PC-3 (cell line): ENCODE measurements at regions of chr7 and their contacts with region 1.

Region 1: DNA sequence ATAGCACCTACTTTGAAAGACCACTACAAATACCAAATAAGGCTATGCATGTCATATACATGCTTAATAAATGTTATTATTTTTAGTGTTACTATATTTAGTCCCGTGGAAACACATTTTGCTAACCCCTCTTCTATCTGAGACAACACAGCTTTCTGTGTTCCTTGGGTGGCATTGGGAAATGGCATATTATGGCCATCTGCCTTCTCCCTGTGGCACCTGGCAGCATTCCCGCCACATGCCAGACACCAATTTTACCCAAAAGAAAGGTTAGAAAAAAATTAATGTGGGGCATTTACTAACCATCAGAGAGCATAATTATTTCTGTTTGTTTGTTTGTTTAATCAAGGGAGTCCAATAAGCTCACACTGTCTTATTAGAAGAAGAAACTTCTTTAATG is 168.6 kb upstream of the ETV1 start:
- DNase-seq: no peak
- ATAC-seq: no peak
- H3K4me3 ChIP-seq: no peak overlapping the region
- H3K27ac ChIP-seq: no peak overlapping the region
- H3K4me1 ChIP-seq: no peaks in the 10 kb centered on the region
- H3K27me3 ChIP-seq: no peaks in the 10 kb centered on the region
- CTCF ChIP-seq: no peak

Region 2: GRCh38 chr7:14144538-14144937 is 13.6 kb before region 1 on chr7:
- CTCF ChIA-PET with region 1: no interaction called
- POLR2A ChIA-PET with region 1: interaction called, 17 read pairs
- intact Hi-C with region 1: no loop called
- DNase-seq: no peak
- ATAC-seq: peak; percentile 18; the same call in 1 of the 2 replicates
- H3K4me3 ChIP-seq: no peak overlapping the region
- H3K27ac ChIP-seq: no peak overlapping the region
- H3K4me1 ChIP-seq: peaks cover 10% of the 10 kb centered on the region
- H3K27me3 ChIP-seq: no peaks in the 10 kb centered on the region
- CTCF ChIP-seq: no peak

Region 3: DNA sequence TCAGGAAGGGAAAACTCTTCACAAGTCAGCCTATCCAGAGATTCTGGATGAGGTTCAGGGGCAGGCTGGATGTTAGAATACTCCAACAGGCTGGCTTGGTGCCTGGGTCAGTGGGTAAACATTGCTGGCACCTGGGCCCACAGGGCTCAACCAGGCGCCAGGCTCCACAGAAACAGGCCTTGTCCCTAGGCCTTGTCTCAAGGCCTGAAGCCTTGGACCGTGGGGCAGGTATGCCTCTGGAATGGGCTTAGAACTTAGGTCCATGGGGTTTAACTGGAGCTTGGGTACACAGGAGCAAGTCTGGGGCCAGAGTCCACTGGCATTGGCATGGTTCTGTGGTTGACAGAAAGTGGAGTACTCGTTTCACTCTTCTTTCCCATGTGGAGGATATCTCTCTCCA is 94.3 kb after region 1 on chr7:
- CTCF ChIA-PET with region 1: no interaction called
- POLR2A ChIA-PET with region 1: no interaction called
- intact Hi-C with region 1: loop called (anchors 5 kb)
- DNase-seq: no peak
- ATAC-seq: no peak
- H3K4me3 ChIP-seq: no peak overlapping the region
- H3K27ac ChIP-seq: no peak overlapping the region
- H3K4me1 ChIP-seq: no peaks in the 10 kb centered on the region
- H3K27me3 ChIP-seq: no peaks in the 10 kb centered on the region
- CTCF ChIP-seq: no peak